ENCODE measurements at regions of chr7 and their contacts with region 1.

Region 1: DNA sequence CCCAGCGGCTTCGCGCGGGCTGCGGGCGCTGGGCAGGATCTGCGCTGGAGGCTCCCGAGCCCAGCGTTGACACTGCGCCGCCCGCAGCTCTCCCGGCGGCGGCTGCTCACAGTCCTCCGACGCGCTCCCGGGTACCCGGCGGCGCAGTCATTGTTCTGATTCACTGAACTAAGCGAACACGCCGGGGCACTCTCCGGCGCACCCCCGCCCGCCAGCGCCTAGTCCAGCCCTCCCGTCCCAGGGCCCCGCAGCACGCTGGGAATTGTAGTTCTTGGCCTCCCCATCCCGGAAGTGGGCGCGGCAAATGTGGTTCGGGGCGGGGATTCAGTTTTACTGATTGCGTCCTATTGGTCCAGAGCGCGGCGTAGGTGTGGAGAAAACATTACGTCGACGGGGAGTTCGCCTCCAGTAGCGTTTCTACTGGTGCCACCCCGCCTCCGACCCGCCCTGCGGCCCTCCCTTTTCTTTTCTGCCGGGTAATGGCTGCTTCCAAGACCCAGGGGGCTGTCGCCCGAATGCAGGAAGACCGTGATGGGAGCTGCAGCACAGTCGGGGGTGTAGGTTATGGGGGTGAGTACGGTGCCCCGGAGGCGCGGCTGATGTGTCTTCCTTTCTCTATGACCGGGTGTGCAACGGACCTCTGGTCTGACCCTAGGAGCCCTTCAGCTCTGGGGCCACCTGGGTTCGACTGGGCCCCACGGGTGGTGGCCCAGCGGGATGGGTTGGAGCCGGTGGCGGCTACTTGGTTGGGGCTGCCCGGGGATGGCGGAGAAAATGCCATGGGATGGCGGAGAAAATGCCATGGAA is at the starts of genes DOCK4 and ZNF277:
- DNase-seq: peak; percentile 99
- ATAC-seq: peak; percentile 96 to 98 (median 96)
- H3K4me3 ChIP-seq: peak within 1 kb of the TSS; percentile 59 to 98 (median 88)
- H3K27ac ChIP-seq: peak within 1 kb of the TSS; percentile 72 to 95 (median 90)
- H3K4me1 ChIP-seq: peaks cover 0 to 43% (median 17%) of the 10 kb centered on the region in 12 donors
- H3K27me3 ChIP-seq: no peaks in the 10 kb centered on the region
- CTCF ChIP-seq: peak in 1 of 12 donors; percentile 16
- POLR2A ChIP-seq: peak; percentile 60 to 98
- total RNA-seq, gene DOCK4: 9.7 to 40.8 (median 17.0) TPM
- total RNA-seq, gene ZNF277: 10.3 to 26.5 (median 16.6) TPM

Region 2: DNA sequence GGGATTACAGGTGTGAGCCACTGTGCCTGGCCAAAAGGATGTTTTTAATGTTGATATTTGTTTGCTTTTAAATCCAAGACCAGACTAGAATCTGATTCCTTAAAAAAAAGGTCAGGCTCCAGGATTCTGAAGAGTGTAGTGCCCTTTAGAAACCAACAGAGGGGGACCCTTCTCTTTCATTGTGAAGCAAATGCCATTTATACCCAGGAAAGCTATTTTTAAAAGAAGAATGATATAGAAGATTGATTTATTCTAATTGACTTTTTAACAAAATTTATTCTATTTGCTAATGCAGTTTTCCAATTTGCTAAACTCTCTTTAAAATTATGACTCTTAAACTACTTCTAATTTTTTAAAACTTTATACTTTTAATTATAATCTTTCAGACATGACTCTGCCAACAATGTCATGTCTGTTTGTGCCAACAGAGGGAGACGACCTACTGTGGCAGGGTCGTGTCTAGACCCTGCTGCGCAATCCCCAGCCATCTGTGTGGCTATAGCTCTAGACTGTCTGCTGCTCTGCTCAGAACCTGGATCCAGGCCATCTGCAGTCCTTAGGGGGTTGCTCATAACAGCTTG is 443.1 kb before region 1 on chr7:
- intact Hi-C with region 1: loop called in 2 of 10 experiments (anchors 10 kb)
- DNase-seq: no peak
- ATAC-seq: peak in 2 of 4 donors; percentile 47 to 67
- H3K4me3 ChIP-seq: no peak overlapping the region
- H3K27ac ChIP-seq: no peak overlapping the region
- H3K4me1 ChIP-seq: peaks cover 0 to 10% (median 0%) of the 10 kb centered on the region in 12 donors
- H3K27me3 ChIP-seq: no peaks in the 10 kb centered on the region
- CTCF ChIP-seq: peak; percentile 35 to 72 (median 60)
- POLR2A ChIP-seq: no peak

Region 3: GRCh38 chr7:111958896-111959295 is 247.5 kb before region 1 on chr7:
- intact Hi-C with region 1: loop called in 6 of 10 experiments (anchors 5 to 10 kb)
- DNase-seq: no peak
- ATAC-seq: no peak
- H3K4me3 ChIP-seq: no peak overlapping the region
- H3K27ac ChIP-seq: no peak overlapping the region
- H3K4me1 ChIP-seq: peaks cover 0 to 43% (median 22%) of the 10 kb centered on the region in 12 donors
- H3K27me3 ChIP-seq: no peaks in the 10 kb centered on the region
- CTCF ChIP-seq: no peak
- POLR2A ChIP-seq: no peak

Region 4: DNA sequence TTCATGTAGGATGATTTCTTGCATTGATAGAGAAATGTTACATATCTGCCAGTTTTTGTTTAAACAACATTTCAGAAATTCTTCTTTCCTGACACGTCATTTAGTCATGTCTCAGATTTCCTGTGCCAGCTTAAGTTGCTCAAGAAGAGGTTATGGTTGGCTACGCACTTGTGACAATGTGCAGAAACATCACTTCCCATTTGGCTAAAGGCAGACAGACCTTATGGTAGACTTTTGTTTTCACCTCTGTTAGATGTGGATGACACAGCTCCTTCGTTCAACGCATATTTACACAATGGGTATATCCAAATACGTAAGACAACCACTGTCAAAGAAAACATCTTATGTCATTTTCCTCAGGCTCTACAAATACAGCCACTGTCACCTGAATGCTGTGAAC is 126.0 kb before region 1 on chr7:
- intact Hi-C with region 1: loop called in 6 of 10 experiments (anchors 5 to 10 kb)
- DNase-seq: no peak
- ATAC-seq: peak; percentile 61 to 83 (median 73)
- H3K4me3 ChIP-seq: peak overlapping the region in 2 of 12 donors; percentile 3 to 14
- H3K27ac ChIP-seq: peak overlapping the region in 9 of 12 donors; percentile 11 to 94 (median 41)
- H3K4me1 ChIP-seq: peaks cover 0 to 68% (median 22%) of the 10 kb centered on the region in 12 donors
- H3K27me3 ChIP-seq: no peaks in the 10 kb centered on the region
- CTCF ChIP-seq: no peak
- POLR2A ChIP-seq: no peak

Region 5: GRCh38 chr7:112162142-112163020 is 44.1 kb before region 1 on chr7:
- intact Hi-C with region 1: loop called in 1 of 10 experiments (anchors 5 kb)
- DNase-seq: peak; percentile 47 to 66 (median 60)
- ATAC-seq: peak; percentile 88 to 94 (median 93)
- H3K4me3 ChIP-seq: no peak overlapping the region
- H3K27ac ChIP-seq: peak overlapping the region in 6 of 12 donors; percentile 9 to 50 (median 33)
- H3K4me1 ChIP-seq: peaks cover 3 to 61% (median 37%) of the 10 kb centered on the region in 12 donors
- H3K27me3 ChIP-seq: no peaks in the 10 kb centered on the region
- CTCF ChIP-seq: no peak
- POLR2A ChIP-seq: no peak

Region 6: GRCh38 chr7:112398534-112398933 is 192.1 kb after region 1 on chr7:
- intact Hi-C with region 1: loop called in 3 of 10 experiments (anchors 5 to 10 kb)
- DNase-seq: no peak
- ATAC-seq: no peak
- H3K4me3 ChIP-seq: no peak overlapping the region
- H3K27ac ChIP-seq: no peak overlapping the region
- H3K4me1 ChIP-seq: no peaks in the 10 kb centered on the region
- H3K27me3 ChIP-seq: peaks cover 0 to 8% (median 0%) of the 10 kb centered on the region in 9 donors
- CTCF ChIP-seq: no peak
- POLR2A ChIP-seq: no peak

Measured in heart left ventricle (tissue), 16 donors.